ENCODE measurements at regions of chr6 and their contacts with region 1.

Region 1: DNA sequence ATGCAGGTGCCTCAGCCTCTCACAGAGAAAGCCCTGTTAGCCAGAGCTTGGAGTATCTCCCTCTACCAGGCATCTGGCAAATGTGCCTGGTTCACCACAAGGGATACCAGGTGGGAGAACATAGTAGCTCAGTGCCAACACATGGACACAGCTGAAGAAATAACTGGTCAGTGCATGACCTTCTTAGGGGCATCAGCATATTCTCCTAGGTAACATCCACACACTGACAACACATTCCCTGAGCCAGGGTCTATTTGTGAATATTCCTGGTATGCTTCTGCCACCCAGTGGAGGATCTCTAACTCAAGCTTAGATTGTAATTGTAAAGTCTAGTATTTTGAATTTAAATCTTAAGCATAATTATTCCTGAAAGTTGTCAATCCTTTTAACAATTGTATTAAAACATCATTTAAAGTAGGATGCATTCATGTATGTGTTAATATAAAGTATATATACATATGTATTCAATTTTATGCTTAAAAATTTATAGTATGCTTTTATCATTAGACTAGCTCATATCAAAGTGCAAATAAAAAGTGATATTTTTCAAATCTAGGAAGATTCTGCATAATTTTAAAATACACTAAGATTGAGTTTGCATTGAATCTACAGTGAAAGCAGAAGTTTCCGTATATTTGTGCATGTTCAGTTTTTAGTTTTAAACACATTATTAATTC is 45.3 kb upstream of the COL21A1 start:
- DNase-seq: peak; percentile 17
- H3K4me3 ChIP-seq: no peak overlapping the region
- CTCF ChIP-seq: peak; percentile 46

Region 2: GRCh38 chr6:55276745-55277530 is 1015.7 kb before region 1 on chr6:
- CTCF ChIA-PET with region 1: interaction called, 11 read pairs
- POLR2A ChIA-PET with region 1: no interaction called
- DNase-seq: peak; percentile 12
- H3K4me3 ChIP-seq: no peak overlapping the region
- CTCF ChIP-seq: peak; percentile 52

Region 3: DNA sequence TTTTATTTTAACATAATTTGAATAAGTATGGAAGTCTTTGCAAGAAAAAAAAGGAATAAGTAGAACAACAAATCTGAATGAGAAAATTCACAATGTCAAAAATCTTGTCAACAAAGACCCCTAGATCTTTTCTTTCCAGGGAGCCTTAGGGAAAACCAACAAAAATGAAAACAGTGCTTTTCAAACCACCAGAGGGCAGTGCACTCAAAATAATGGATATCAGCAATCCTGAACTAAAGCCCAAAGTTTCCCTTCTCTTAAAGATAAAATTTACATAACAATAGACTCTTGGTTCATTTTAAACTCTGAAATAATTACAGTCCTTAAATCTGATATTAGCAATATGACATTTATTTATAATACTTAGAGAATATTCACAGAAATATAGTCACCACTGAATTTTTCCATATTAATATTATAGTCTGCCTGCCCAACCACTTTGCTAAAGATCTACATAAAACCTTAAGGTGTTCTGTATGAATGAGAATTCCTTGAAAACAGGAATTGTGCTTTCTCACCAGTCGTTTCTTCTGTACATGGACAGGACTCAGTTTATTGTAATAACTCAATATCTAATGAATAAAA is 311.9 kb before region 1 on chr6:
- CTCF ChIA-PET with region 1: interaction called, 107 read pairs
- POLR2A ChIA-PET with region 1: no interaction called
- DNase-seq: no peak
- H3K4me3 ChIP-seq: no peak overlapping the region
- CTCF ChIP-seq: peak; percentile 40

Region 4: DNA sequence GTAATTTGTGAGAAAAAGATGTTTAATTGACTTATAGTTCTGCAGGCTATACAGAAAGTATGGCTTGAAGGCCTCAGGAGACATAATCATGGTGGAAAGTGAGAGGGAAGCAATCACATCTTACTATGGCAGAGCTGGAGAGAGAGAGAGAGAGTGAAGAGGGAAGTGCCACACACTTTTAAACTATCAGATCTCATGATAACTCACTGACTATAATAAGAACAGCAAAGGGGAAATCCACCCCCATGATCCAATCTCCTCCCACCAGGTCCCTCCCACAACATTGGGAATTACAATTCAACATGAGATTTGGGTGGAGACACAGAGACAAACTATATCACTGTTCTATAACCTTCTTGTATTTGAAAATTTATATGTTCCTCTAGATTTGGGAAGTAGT is 300.1 kb before region 1 on chr6:
- CTCF ChIA-PET with region 1: interaction called, 12 read pairs
- POLR2A ChIA-PET with region 1: no interaction called
- DNase-seq: no peak
- H3K4me3 ChIP-seq: no peak overlapping the region
- CTCF ChIP-seq: no peak

Region 5: GRCh38 chr6:56021943-56022342 is 270.7 kb before region 1 on chr6:
- CTCF ChIA-PET with region 1: interaction called, 20 read pairs
- POLR2A ChIA-PET with region 1: no interaction called
- DNase-seq: no peak
- H3K4me3 ChIP-seq: no peak overlapping the region
- CTCF ChIP-seq: no peak

Region 6: DNA sequence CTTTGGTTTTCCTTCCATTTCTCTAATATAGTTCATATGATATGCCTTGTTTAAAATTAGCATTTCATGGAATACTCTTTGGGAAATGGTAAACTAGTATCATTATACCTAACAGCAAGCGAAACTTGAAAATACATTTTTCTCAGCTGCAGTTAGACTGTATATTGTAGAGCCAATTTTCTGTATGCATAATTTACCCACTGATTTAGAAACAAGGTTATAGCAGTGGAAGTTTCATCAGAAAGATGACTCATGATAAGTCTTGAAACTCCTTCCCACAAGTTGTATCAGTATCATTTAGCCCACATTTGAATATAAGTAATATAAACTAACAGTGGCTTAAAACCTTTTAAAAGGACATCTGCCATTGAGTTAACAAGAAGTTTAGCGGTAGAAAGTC is 252.4 kb before region 1 on chr6:
- CTCF ChIA-PET with region 1: interaction called, 44 read pairs
- POLR2A ChIA-PET with region 1: no interaction called
- DNase-seq: no peak
- H3K4me3 ChIP-seq: no peak overlapping the region
- CTCF ChIP-seq: no peak

Region 7: DNA sequence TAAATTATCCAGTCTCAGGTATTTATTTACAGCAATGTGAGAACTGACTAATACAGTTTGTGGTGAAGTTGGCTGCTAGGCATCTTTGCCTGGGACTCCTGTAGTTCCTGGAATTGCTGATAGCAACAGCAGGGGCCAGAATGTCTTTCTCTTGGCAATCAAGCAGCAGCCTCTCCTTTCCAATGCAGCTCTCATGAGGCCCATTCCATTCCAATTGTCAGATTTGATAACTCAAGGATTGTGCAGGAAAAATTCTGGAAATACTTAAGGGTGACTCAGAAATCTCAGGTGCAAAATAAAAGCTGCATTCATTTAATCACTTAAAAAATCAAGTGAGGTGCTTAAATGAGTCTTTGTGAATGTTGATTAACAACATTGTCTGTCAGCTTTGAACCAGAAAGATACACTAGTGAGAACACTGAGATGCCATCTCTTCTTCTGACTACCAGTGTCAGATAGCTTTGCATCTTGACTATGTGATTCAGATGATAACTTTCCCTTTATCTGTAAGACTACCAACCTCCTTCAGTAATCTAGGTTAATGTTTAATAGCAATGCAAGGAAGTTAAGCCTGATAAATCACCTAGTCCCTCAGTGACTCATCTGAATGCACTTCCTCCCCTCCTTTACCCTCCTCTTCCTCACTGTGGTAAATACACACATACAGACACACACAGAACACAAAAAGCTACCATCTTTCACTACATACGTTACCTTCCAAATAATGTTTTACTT is 13.1 kb before region 1 on chr6:
- CTCF ChIA-PET with region 1: interaction called, 44 read pairs
- POLR2A ChIA-PET with region 1: no interaction called
- DNase-seq: no peak
- H3K4me3 ChIP-seq: no peak overlapping the region
- CTCF ChIP-seq: no peak